ENCODE measurements at regions of chr19 and their contacts with region 1.

Region 1: DNA sequence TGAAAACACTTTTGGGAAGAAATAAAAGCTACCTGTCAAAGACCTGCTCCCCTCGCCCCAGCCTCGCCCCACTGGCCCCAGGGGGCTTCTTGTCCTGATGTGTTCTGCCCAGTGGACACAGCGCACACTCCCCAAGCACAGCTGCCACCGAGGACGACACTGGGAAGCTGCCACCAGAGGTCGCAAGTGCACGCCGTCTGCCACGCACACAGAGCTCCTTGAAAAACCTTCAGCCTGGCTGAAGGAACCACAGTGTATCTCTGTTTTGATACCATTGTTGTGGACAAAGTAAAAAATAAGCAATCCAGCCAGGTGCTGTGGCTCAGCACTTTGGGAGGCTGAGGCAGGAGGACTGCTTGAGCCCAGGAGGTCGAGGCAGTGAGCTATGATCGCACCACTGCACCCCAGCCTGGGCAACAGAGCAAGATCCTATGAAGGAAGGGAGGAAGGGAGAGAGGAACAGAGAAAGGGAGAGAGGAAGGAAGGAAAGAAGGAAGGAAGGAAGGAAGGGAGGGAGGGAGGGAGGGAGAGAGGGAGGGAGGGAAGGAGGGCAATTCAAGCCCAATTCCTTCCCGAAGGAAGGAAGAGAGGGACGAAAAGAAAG is 57.3 kb downstream of the CEBPG start:
- DNase-seq: peak in 1 of 2 donors; percentile 66
- H3K4me3 ChIP-seq: no peak overlapping the region
- H3K27ac ChIP-seq: no peak overlapping the region
- H3K4me1 ChIP-seq: no peaks in the 10 kb centered on the region
- H3K27me3 ChIP-seq: no peaks in the 10 kb centered on the region
- CTCF ChIP-seq: peak; percentile 55 to 61

Region 2: GRCh38 chr19:33771384-33772101 is 340.8 kb after region 1 on chr19:
- intact Hi-C with region 1: loop called (anchors 2 kb)
- DNase-seq: peak; percentile 53 to 77
- H3K4me3 ChIP-seq: no peak overlapping the region
- H3K27ac ChIP-seq: no peak overlapping the region
- H3K4me1 ChIP-seq: no peaks in the 10 kb centered on the region
- H3K27me3 ChIP-seq: peaks cover 0 to 78% of the 10 kb centered on the region in 2 donors
- CTCF ChIP-seq: peak; percentile 73 to 77